Endothelial cell of umbilical vein (primary cell): ENCODE measurements at regions of chr11 and their contacts with region 1.

Region 1: DNA sequence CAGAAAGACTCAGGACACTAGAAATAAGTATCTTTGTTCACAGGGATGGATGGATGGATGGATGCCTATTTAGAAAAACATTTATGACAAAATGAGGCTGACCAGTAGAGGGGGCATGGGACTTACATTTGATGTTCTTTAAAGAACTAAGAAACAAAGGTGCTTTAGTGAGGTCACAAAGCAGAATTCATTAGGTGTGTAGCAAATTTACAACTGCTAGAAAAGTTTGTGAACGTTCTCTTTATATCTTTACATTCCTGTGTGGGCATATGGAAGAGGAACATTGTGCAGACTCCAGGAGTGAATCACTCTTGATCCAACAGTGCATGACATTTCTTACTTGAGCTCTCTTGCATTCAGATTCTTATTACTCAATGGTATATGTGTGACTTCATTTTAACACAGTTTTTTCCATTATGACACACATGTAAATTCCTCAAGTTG is 15.8 kb upstream of the SIK2 start:
- DNase-seq: peak; percentile 59
- H3K4me3 ChIP-seq: no peak overlapping the region
- H3K27ac ChIP-seq: no peak overlapping the region
- H3K4me1 ChIP-seq: peaks cover 8% of the 10 kb centered on the region
- H3K27me3 ChIP-seq: peaks cover 0 to 2% of the 10 kb centered on the region in 2 experiments
- CTCF ChIP-seq: peak; percentile 38 to 49
- POLR2A ChIP-seq: no peak

Region 2: DNA sequence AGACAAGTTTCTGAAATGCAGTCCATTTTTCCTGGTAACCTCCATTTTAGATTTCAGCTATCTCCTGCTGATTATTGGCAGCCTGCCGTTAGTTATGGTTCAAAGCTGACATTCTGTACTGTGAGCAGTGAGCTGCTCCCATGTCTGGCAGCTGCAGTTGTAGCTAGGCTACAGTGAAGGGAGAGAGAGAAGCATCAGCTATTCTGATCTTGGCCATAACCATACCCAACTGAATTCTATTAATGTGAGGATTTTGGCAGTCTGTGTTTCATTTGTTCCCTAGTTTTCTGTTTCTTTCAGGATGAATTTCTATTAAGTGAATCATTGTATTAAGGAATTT is 49.3 kb after region 1 on chr11:
- CTCF ChIA-PET with region 1: no interaction called
- POLR2A ChIA-PET with region 1: no interaction called
- dilution Hi-C with region 1: no loop called
- intact Hi-C with region 1: no loop called
- DNase-seq: no peak
- H3K4me3 ChIP-seq: no peak overlapping the region
- H3K27ac ChIP-seq: no peak overlapping the region
- H3K4me1 ChIP-seq: peaks cover 23% of the 10 kb centered on the region
- H3K27me3 ChIP-seq: no peaks in the 10 kb centered on the region
- CTCF ChIP-seq: no peak
- POLR2A ChIP-seq: no peak

Region 3: GRCh38 chr11:111846636-111847035 is 260.2 kb after region 1 on chr11:
- CTCF ChIA-PET with region 1: interaction called, 33 read pairs
- POLR2A ChIA-PET with region 1: no interaction called
- dilution Hi-C with region 1: no loop called
- intact Hi-C with region 1: loop called (anchors 1 kb)
- DNase-seq: peak; percentile 55
- H3K4me3 ChIP-seq: no peak overlapping the region
- H3K27ac ChIP-seq: no peak overlapping the region
- H3K4me1 ChIP-seq: peaks cover 14% of the 10 kb centered on the region
- H3K27me3 ChIP-seq: no peaks in the 10 kb centered on the region
- CTCF ChIP-seq: no peak
- POLR2A ChIP-seq: no peak

Region 4: DNA sequence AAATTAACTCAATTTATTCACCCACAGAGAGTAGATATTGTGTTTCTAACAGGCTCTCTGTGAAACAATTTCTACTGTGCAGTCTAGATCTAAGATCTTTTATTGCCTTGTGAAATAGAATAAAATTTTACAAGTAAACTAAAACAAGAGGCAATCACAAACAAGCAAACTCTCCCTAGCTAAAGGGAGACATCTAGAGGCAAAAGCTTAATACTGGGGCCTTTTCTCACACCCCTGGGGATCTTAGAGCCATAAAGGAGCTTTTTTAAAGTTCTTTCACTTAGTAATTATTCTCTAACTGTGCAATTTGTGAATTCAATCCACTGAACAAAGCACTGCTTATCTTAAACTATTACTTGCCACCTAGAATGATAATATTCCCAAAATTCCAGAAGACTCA is 265.2 kb after region 1 on chr11:
- CTCF ChIA-PET with region 1: interaction called, 16 read pairs
- POLR2A ChIA-PET with region 1: no interaction called
- dilution Hi-C with region 1: no loop called
- intact Hi-C with region 1: no loop called
- DNase-seq: peak; percentile 18
- H3K4me3 ChIP-seq: no peak overlapping the region
- H3K27ac ChIP-seq: no peak overlapping the region
- H3K4me1 ChIP-seq: peaks cover 2% of the 10 kb centered on the region
- H3K27me3 ChIP-seq: no peaks in the 10 kb centered on the region
- CTCF ChIP-seq: peak in 1 of 2 donors; percentile 23
- POLR2A ChIP-seq: no peak

Region 5: DNA sequence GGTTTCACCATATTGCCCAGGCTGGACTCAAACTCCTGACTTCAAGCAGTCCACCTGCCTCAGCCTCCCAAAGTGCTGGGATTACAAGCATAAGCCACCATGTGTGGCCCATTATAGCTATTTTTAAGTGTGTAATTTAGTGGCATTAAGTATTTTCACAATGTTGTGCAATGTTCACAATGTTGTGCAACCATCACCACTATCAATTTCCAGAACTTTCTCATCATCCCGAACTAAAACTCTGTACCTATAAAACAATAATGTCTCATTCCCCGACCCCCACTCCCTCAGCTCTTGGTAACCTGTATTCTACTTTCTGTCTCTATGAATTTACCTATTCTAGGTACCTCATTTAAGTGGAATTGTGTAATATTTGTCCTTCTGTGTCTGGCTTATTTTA is 300.4 kb after region 1 on chr11:
- CTCF ChIA-PET with region 1: no interaction called
- POLR2A ChIA-PET with region 1: no interaction called
- dilution Hi-C with region 1: no loop called
- intact Hi-C with region 1: no loop called
- DNase-seq: no peak
- H3K4me3 ChIP-seq: no peak overlapping the region
- H3K27ac ChIP-seq: no peak overlapping the region
- H3K4me1 ChIP-seq: peaks cover 4% of the 10 kb centered on the region
- H3K27me3 ChIP-seq: no peaks in the 10 kb centered on the region
- CTCF ChIP-seq: no peak
- POLR2A ChIP-seq: no peak